ENCODE measurements at regions of chr12 and their contacts with region 1.

Region 1: DNA sequence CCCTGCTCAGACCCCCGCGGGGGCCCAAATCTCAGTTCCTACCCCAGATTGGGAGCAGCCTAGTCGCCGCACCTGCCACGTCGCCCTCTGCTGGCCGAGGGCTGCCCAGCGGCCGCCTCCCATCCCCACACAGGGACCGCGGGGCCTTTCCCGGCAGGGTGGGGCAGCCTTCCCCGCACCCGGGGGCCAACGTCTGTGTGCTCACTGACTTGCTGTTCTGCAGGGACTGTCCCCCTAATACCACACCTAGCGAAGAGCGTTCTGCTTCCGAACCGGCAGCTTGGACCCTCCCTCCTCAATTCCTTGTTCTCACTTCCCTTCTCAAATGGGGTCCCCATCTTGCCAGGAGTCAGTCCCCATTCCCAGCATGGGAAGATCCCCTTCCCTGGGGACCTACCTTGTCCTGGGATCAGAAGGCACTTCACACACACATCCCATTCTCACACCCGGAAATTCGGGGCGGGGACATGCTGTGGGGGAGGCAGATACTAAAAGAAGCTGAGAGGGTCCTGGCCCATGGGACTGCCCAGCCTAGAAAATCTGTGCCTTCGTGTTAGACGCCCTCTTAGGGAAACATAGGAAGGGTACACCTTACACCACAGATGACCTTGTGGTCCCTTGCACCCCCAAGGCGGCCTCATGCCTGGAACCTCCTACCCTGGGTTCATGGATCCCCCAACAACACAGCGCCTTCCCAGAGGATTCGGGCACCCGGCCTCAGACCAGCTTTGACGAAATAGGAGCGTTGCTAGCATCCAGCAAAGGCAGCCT is 16.4 kb downstream of the ACVRL1 start:
- DNase-seq: peak in 4 of 6 donors; percentile 50 to 83 (median 70)
- ATAC-seq: peak; percentile 55 to 80 (median 75)
- H3K4me3 ChIP-seq: no peak overlapping the region
- H3K27ac ChIP-seq: peak overlapping the region in 2 of 4 donors; percentile 35 to 74
- H3K4me1 ChIP-seq: peaks cover 0 to 8% (median 0%) of the 10 kb centered on the region in 3 donors
- H3K27me3 ChIP-seq: no peaks in the 10 kb centered on the region
- CTCF ChIP-seq: peak; percentile 51 to 76 (median 72)

Region 2: GRCh38 chr12:51980051-51980808 is 56.5 kb after region 1 on chr12:
- intact Hi-C with region 1: loop called in 1 of 3 experiments (anchors 5 kb)
- DNase-seq: peak in 5 of 6 donors; percentile 45 to 75 (median 54)
- ATAC-seq: peak; percentile 71 to 91 (median 85)
- H3K4me3 ChIP-seq: no peak overlapping the region
- H3K27ac ChIP-seq: peak overlapping the region in 1 of 4 donors; percentile 44
- H3K4me1 ChIP-seq: peaks cover 18 to 26% (median 25%) of the 10 kb centered on the region in 3 donors
- H3K27me3 ChIP-seq: no peaks in the 10 kb centered on the region
- CTCF ChIP-seq: peak; percentile 93 to 98 (median 96)

Region 3: GRCh38 chr12:51994959-51995358 is 71.3 kb after region 1 on chr12:
- intact Hi-C with region 1: loop called in 1 of 3 experiments (anchors 5 kb)
- DNase-seq: no peak
- ATAC-seq: no peak
- H3K4me3 ChIP-seq: no peak overlapping the region
- H3K27ac ChIP-seq: no peak overlapping the region
- H3K4me1 ChIP-seq: no peaks in the 10 kb centered on the region
- H3K27me3 ChIP-seq: no peaks in the 10 kb centered on the region
- CTCF ChIP-seq: no peak

Measured in pancreas (tissue), 10 donors.